Ascending aorta (tissue), 2 donors: ENCODE measurements at regions of chr17 and their contacts with region 1.

Region 1: DNA sequence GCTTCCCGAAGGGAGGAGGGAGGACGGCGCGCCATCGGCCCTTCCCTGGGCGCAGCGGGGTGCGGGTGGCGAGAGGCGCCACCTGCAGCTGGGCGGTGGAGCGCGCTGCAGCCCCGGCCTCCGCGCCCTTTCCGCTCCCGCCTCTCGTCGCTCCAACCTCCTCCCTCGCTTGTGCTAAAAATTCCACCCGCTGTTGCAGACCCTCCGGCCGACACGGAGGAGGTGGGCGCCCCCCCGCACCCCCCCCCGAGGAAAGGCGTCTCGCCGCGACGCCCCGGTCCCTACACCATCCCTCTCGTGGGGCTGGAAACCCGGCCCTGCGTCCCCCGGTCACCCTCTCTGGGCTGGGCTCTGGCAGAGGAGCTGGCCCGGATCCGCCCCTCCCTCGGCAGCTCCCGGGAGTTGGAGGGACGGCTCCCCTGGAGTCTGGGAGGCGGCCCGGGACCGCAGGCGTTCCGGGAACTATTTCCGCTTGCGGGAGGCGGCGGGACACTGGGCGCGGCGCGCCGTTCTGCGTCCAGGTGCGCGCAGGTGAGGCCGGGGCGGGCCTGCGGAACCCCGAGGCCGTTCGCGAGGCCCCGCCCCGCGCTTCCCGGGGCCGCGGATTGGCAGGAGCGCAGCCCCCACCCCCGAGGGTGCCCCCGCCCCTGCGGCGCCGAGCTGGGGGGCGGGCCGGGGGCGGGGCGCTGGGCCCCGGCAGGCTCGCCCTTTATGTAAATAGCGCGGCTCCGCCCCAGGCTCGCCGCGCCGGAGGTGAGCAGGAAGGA is at the start of gene LLGL2:
- DNase-seq: no peak
- H3K4me3 ChIP-seq: peak within 1 kb of the TSS; percentile 71 to 77
- H3K27ac ChIP-seq: peak within 1 kb of the TSS; percentile 57 to 60
- H3K4me1 ChIP-seq: peaks cover 4 to 11% of the 10 kb centered on the region in 2 donors
- H3K27me3 ChIP-seq: no peaks in the 10 kb centered on the region
- CTCF ChIP-seq: peak; percentile 24 to 65 (median 35)
- total RNA-seq, gene LLGL2: 41.8 TPM

Region 2: GRCh38 chr17:75589012-75589918 is 64.1 kb after region 1 on chr17:
- intact Hi-C with region 1: loop called (anchors 1 kb)
- DNase-seq: peak; percentile 54 to 93
- H3K4me3 ChIP-seq: peak overlapping the region; percentile 71 to 79
- H3K27ac ChIP-seq: peak overlapping the region; percentile 86 to 87
- H3K4me1 ChIP-seq: no peaks in the 10 kb centered on the region
- H3K27me3 ChIP-seq: no peaks in the 10 kb centered on the region
- CTCF ChIP-seq: peak; percentile 46 to 97 (median 53)